ENCODE measurements at regions of chr1 and their contacts with region 1.

Region 1: DNA sequence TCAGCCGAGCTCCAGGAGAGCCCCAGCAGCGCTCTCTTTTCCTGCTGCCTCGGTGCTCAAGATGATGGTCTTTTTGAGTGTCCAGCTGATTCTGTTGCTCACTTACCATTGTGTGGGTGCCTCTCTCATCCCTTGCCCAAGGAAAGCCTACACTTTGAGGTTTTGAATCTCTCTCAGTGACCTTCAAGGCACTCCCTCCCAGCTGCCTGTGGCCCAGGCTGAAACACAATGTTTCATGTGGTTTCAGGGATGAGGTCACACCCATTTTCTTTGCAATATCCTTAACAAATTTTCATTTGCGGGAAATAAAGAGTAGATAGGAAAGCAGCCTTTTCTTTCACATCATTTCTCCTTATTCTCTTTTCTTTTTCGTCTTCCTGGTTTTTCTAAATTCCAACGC is 12.6 kb upstream of the MRPS14 start:
- DNase-seq: no peak
- H3K4me3 ChIP-seq: no peak overlapping the region
- H3K27ac ChIP-seq: no peak overlapping the region
- H3K4me1 ChIP-seq: no peaks in the 10 kb centered on the region
- H3K27me3 ChIP-seq: no peaks in the 10 kb centered on the region
- CTCF ChIP-seq: no peak
- POLR2A ChIP-seq: no peak

Region 2: DNA sequence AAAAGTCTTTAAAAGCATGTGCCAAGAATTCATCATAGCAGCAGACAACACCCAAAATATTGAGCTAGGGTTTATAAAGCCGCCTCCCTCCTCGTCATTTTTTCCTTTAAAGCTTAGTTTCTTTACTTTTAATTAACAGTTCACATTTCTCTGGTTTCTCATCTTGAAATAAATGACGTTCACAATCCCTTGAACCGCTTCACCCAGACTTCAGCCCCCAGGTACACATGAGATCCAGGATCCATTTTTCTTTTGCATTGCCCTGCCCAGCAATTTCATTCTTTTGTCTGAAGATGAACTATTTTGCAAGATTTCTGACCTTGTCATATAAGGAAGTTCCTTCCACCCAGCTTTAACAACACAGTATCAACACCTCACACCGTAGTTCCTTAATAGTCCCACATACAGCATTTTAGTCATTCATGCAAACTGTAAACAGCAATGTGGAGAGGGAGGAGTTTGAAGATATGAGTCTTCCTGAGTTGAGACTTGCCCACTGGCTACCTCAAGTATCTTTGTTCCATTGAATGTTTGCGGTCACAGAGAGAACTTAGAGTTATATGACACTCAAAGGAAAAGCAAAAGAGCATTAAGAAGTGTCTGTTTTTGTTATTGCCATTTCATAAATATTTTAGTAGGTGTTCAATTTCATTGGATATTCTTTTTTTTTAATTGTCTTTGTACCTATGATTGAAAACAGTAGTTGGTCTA is 71.4 kb before region 1 on chr1:
- intact Hi-C with region 1: no loop called
- DNase-seq: no peak
- H3K4me3 ChIP-seq: peak overlapping the region; percentile 15 to 53 (median 43)
- H3K27ac ChIP-seq: peak overlapping the region; percentile 85 to 93 (median 91)
- H3K4me1 ChIP-seq: peaks cover 20 to 65% (median 22%) of the 10 kb centered on the region in 3 donors
- H3K27me3 ChIP-seq: no peaks in the 10 kb centered on the region
- CTCF ChIP-seq: no peak
- POLR2A ChIP-seq: peak in 2 of 4 donors; percentile 18 to 32

Region 3: GRCh38 chr1:175129997-175130648 is 94.3 kb after region 1 on chr1:
- intact Hi-C with region 1: loop called (anchors 10 kb)
- DNase-seq: no peak
- H3K4me3 ChIP-seq: no peak overlapping the region
- H3K27ac ChIP-seq: peak overlapping the region; percentile 46 to 77 (median 52)
- H3K4me1 ChIP-seq: peaks cover 0 to 62% (median 33%) of the 10 kb centered on the region in 3 donors
- H3K27me3 ChIP-seq: no peaks in the 10 kb centered on the region
- CTCF ChIP-seq: no peak
- POLR2A ChIP-seq: no peak

Region 4: GRCh38 chr1:175154629-175155472 is 119.0 kb after region 1 on chr1:
- intact Hi-C with region 1: no loop called
- DNase-seq: no peak
- H3K4me3 ChIP-seq: no peak overlapping the region
- H3K27ac ChIP-seq: no peak overlapping the region
- H3K4me1 ChIP-seq: peaks cover 0 to 8% (median 0%) of the 10 kb centered on the region in 3 donors
- H3K27me3 ChIP-seq: peaks cover 0 to 49% (median 0%) of the 10 kb centered on the region in 4 donors
- CTCF ChIP-seq: peak; percentile 86 to 95 (median 90)
- POLR2A ChIP-seq: no peak

Region 5: GRCh38 chr1:175192630-175193526 is 157.0 kb after region 1 on chr1 and contains the start of gene KIAA0040:
- intact Hi-C with region 1: no loop called
- DNase-seq: no peak
- H3K4me3 ChIP-seq: peak within 1 kb of the TSS; percentile 46 to 77 (median 66)
- H3K27ac ChIP-seq: peak within 1 kb of the TSS; percentile 72 to 94 (median 90)
- H3K4me1 ChIP-seq: peaks cover 9 to 94% (median 27%) of the 10 kb centered on the region in 3 donors
- H3K27me3 ChIP-seq: peaks cover 0 to 31% (median 0%) of the 10 kb centered on the region in 4 donors
- CTCF ChIP-seq: peak in 1 of 6 experiments; percentile 8
- POLR2A ChIP-seq: peak in 2 of 4 donors; percentile 24 to 74
- total RNA-seq, gene KIAA0040: 3.3 to 22.7 (median 10.3) TPM